ENCODE measurements at regions of chr11 and their contacts with region 1.

Region 1: DNA sequence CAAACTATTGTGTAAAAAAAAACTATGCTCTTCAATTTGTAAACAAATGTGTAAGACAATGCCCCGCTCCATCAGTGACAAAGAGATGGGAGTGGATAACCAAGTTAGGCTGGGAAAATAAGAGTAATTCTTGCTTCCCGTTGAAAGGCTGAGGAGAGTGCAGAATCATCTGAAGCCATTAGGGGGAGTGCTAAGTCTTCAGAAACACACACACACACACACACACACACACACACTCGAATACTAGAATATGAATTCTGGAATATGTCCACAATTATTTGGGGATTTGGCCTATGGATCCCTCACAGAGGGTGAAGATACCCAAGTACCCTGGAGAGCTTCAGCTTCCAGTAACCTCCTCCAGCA is 27.8 kb upstream of the ROBO3 start:
- DNase-seq: peak; percentile 80

Region 2: GRCh38 chr11:124359566-124359965 is 477.9 kb before region 1 on chr11:
- in situ Hi-C with region 1: no loop called
- DNase-seq: no peak

Region 3: DNA sequence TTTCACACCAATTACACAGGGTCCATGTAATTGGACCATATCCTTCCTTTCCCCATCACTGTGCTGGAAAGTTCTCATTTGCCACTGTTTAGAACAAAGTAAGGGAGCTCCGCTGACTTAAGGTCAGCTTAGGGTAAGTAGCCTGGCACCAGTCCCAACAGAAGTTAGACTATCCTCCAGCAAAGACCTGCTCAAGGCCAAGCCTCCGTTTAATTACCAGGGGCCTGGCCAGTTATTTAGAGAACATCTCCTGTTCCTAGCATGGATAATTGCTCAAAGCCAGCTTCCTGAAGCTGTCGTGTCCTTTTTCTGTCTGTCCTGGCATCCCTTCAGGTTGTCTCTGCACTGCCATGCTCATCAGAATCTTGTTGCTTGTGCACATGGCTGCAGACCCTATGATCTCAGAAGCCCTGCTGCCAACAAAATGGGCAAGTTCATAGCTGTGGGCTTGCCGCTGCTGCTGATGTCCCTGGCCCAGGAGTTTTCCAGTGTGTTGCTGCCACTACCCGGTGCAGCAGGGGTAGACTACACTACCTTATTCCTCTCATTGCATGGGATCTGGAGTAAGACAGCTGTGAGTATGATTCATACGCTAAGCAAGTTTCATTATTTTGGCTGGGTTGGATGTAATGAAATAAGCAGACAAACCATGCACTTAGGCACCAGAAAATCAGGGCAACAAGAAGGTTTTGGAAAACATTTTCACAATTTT is 259.6 kb before region 1 on chr11:
- in situ Hi-C with region 1: no loop called
- DNase-seq: no peak

Region 4: DNA sequence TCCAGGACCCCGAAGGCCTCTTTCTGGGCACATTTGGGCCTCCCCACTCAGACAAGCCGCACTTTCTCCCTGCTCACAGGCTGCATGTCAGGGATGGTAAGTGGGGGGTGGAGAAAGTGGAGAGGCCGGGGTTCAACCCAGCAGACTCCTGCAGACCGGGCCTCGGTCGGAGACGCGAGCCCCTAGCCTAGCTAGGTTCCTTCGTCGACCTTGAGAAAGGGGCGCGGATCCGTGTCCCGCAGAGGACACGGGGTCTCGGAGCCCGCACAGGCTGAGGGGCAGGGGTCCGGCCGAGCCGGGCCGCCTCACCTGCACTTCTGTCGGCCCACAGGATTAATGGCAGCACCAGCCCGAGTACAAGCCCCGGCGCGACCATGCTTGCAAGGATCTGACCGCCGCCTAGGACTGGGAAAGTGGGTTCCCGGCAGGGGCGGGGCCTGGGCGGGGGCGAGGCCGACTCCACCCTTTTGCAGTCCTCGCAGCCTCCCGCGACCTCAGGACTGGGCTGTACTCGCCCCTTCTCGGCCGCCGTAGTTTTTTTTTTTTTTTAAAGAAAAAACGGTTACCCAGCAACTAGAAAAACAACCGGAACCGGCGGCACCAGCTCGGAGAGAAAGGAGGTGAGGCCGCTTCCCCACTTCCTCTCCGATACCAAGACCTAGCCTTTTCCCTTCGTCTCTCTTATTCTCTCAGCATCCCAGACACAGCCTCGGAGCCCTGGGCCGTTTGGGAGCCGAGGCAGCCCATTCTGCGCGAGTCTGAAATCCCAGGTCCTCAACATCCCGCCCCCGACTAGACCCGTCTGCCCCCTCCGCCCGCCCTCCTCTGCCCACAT is 163.9 kb before region 1 on chr11 and contains the starts of genes SIAE and SPA17:
- in situ Hi-C with region 1: loop called (anchors 25 kb)
- DNase-seq: peak; percentile 95

Region 5: GRCh38 chr11:125082611-125083311 is 245.3 kb after region 1 on chr11:
- in situ Hi-C with region 1: no loop called
- DNase-seq: no peak